ENCODE measurements at regions of chr2 and their contacts with region 1.

Region 1: GRCh38 chr2:210072922-210073509 is 70.6 kb downstream of the RPE start:
- DNase-seq: no peak
- ATAC-seq: no peak

Region 2: DNA sequence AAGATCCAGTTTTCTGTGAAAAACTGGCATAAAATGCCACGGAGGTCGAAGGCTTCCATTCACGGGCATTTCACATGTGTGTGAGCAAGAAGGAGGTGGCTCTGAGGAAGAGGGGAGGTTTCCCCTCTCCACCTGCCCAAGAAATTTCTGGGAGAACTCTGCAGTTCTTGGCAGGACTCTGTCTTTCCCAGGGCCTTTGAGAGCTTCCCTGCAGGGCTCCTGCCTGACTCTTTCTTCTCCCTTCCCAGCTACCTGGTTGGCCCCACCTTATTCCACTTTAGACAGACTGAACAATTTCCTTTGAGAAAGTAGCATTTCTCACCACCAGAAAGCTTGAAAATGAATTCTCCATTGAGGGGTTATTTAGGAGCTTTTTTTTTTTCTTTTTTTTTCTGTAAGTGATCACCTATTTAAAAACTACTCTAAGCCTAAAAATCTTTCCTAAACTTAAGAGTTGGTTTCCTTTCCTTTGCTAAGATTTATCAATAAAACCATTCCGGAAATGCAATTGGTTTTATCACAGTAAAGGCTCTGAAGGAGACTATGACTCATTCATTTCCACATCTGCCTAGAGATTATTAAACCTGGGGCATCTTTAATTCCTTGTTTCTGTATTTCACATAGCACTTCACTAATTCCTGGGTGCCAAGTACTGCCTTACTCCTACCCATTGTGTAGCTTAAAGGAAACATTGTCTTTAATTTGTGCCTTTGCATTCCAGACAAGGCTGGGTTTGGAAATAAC is 242.1 kb before region 1 on chr2:
- intact Hi-C with region 1: no loop called
- DNase-seq: no peak
- ATAC-seq: no peak

Region 3: GRCh38 chr2:209988010-209988409 is 85.0 kb before region 1 on chr2:
- intact Hi-C with region 1: loop called (anchors 10 kb)
- DNase-seq: no peak
- ATAC-seq: no peak